Ovary (tissue), 10 donors: ENCODE measurements at regions of chr4 and their contacts with region 1.

Region 1: GRCh38 chr4:155758481-155759404 is at the start of gene GUCY1B1:
- DNase-seq: peak; percentile 81 to 94 (median 92)
- H3K4me3 ChIP-seq: peak within 1 kb of the TSS; percentile 58
- H3K27ac ChIP-seq: peak within 1 kb of the TSS; percentile 18 to 69
- H3K4me1 ChIP-seq: no peaks in the 10 kb centered on the region
- H3K27me3 ChIP-seq: no peaks in the 10 kb centered on the region
- CTCF ChIP-seq: peak; percentile 22 to 56 (median 31)
- EP300 ChIP-seq: no peak
- POLR2A ChIP-seq: no peak
- total RNA-seq, gene GUCY1B1: 3.6 to 9.2 (median 5.5) TPM

Region 2: DNA sequence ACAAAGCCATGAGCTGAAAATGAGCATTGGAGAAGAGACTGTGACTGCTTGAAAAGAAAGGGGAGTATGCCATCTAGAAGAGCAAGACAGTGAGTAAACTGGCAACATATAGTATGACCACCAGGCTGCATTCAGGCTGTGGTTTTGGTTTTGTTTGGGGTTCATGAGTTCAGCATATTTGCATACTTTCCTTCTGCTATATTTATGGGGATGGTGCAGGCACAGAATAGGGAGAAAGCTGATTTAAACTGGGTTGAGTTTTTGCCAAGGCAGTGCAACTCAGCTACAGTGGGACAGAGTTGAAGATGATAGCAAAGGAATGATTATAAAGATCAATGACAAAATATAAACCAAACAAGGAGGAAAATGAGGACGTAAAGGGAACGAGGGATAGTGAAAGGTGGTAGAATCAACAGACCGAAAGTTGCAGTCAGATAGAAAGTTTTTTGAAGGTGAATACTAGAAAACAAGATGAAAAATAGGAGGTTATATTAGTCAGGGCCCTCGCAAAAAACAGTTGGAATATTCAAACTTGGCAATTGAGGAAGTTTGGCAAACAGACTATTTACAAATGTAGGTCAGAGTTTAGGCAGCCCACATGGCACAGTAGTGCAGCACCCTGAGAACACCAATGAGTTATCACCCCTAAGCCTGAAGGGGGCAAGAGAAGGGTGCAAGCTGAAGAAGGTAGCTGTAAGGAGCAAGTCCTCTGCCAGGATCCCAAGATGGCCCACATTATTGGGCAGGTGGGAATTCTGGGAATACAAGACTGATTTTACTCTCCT is 267.2 kb before region 1 on chr4:
- intact Hi-C with region 1: no loop called
- DNase-seq: no peak
- H3K4me3 ChIP-seq: no peak overlapping the region
- H3K27ac ChIP-seq: no peak overlapping the region
- H3K4me1 ChIP-seq: peaks cover 6% of the 10 kb centered on the region
- H3K27me3 ChIP-seq: no peaks in the 10 kb centered on the region
- CTCF ChIP-seq: no peak
- EP300 ChIP-seq: no peak
- POLR2A ChIP-seq: no peak

Region 3: DNA sequence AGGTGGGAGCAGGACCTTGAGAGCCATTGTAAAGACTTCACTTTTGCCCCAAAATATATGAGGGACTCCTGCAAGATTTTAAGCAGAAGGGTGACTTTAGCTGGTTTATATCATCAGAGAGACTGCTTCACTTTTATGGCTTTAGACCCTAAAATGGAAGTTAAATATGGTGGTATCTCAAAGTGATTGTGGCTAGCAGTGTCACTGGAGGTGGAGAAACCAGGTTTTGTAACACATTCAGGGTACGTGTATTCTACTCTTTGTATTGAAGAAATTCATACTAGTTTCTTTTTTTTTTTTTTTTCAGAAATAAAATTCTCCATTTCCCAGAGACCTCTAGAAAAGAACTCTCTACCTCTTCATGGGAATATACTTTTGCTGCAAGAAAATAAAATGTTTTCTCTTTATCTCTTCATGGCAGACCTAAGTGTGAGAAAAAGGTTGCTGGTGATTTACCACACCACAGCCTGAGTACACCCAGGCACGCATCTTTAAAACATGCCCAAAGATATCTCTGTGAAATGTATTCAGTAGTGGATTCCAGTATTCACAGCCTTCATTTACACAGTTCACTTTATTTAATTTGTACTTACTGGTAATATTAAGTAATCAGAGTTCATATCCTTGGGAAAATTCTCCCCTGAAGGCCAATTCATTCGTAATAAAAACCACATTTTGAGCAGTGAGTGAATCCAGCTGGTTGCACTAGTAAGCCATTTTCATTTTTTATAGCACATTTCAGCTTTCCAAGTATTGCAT is 166.4 kb before region 1 on chr4:
- intact Hi-C with region 1: no loop called
- DNase-seq: no peak
- H3K4me3 ChIP-seq: no peak overlapping the region
- H3K27ac ChIP-seq: no peak overlapping the region
- H3K4me1 ChIP-seq: no peaks in the 10 kb centered on the region
- H3K27me3 ChIP-seq: no peaks in the 10 kb centered on the region
- CTCF ChIP-seq: no peak
- EP300 ChIP-seq: no peak
- POLR2A ChIP-seq: no peak

Region 4: GRCh38 chr4:155609455-155610059 is 149.2 kb before region 1 on chr4:
- intact Hi-C with region 1: loop called in 1 of 4 experiments (anchors 5 kb)
- DNase-seq: no peak
- H3K4me3 ChIP-seq: no peak overlapping the region
- H3K27ac ChIP-seq: no peak overlapping the region
- H3K4me1 ChIP-seq: no peaks in the 10 kb centered on the region
- H3K27me3 ChIP-seq: no peaks in the 10 kb centered on the region
- CTCF ChIP-seq: no peak
- EP300 ChIP-seq: no peak
- POLR2A ChIP-seq: no peak

Region 5: GRCh38 chr4:155693015-155693663 is 65.6 kb before region 1 on chr4:
- intact Hi-C with region 1: loop called in 1 of 4 experiments (anchors 10 kb)
- DNase-seq: no peak
- H3K4me3 ChIP-seq: no peak overlapping the region
- H3K27ac ChIP-seq: no peak overlapping the region
- H3K4me1 ChIP-seq: no peaks in the 10 kb centered on the region
- H3K27me3 ChIP-seq: no peaks in the 10 kb centered on the region
- CTCF ChIP-seq: no peak
- EP300 ChIP-seq: no peak
- POLR2A ChIP-seq: no peak